ENCODE measurements at regions of chr12 and their contacts with region 1.

Region 1: GRCh38 chr12:118357257-118358007 is 15.3 kb downstream of the TAOK3 start:
- DNase-seq: peak; percentile 60 to 78 (median 64)
- H3K4me3 ChIP-seq: peak overlapping the region; percentile 15 to 56
- H3K4me3 Mint-ChIP-seq: peak overlapping the region; percentile 63 to 94 (median 82)
- H3K27ac ChIP-seq: peak overlapping the region; percentile 28
- H3K27ac Mint-ChIP-seq: peak overlapping the region; percentile 74 to 93 (median 86)
- H3K4me1 ChIP-seq: peaks cover 41% of the 10 kb centered on the region
- H3K4me1 Mint-ChIP-seq: peaks cover 29 to 67% (median 49%) of the 10 kb centered on the region in 4 donors
- H3K27me3 ChIP-seq: no peaks in the 10 kb centered on the region
- H3K27me3 Mint-ChIP-seq: no peaks in the 10 kb centered on the region

Region 2: DNA sequence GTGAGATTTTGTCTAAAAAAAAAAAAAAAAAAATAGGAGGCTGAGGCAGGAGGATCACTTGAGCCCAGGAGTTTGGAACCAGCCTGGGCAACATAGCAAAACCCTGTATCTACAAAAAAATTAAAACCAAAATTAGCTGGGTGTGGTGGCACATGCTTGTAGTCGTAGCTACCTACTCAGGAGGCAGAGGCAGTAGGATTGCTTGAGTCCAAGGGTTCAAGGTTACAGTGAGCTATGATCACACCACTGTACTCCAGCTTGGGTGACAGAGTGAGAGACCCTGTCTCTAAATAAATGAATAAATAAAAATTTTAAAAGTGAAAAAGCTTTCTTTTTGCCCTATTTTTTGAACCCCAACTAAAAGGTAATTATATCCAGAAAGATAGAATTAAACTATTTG is 107.9 kb before region 1 on chr12:
- CTCF ChIA-PET with region 1: no interaction called
- POLR2A ChIA-PET with region 1: no interaction called
- intact Hi-C with region 1: no loop called
- DNase-seq: no peak
- H3K4me3 ChIP-seq: no peak overlapping the region
- H3K4me3 Mint-ChIP-seq: no peak overlapping the region
- H3K27ac ChIP-seq: no peak overlapping the region
- H3K27ac Mint-ChIP-seq: no peak overlapping the region
- H3K4me1 ChIP-seq: no peaks in the 10 kb centered on the region
- H3K4me1 Mint-ChIP-seq: peaks cover 0 to 10% (median under 1%) of the 10 kb centered on the region in 4 donors
- H3K27me3 ChIP-seq: no peaks in the 10 kb centered on the region
- H3K27me3 Mint-ChIP-seq: no peaks in the 10 kb centered on the region

Region 3: GRCh38 chr12:118299791-118300460 is 57.5 kb before region 1 on chr12:
- CTCF ChIA-PET with region 1: no interaction called
- POLR2A ChIA-PET with region 1: interaction called, 3 read pairs
- intact Hi-C with region 1: loop called (anchors 5 kb)
- DNase-seq: no peak
- H3K4me3 ChIP-seq: no peak overlapping the region
- H3K4me3 Mint-ChIP-seq: no peak overlapping the region
- H3K27ac ChIP-seq: no peak overlapping the region
- H3K27ac Mint-ChIP-seq: peak overlapping the region in 2 of 7 donors; percentile 11 to 48
- H3K4me1 ChIP-seq: peaks cover 13% of the 10 kb centered on the region
- H3K4me1 Mint-ChIP-seq: peaks cover 31 to 47% (median 35%) of the 10 kb centered on the region in 4 donors
- H3K27me3 ChIP-seq: no peaks in the 10 kb centered on the region
- H3K27me3 Mint-ChIP-seq: no peaks in the 10 kb centered on the region

Region 4: DNA sequence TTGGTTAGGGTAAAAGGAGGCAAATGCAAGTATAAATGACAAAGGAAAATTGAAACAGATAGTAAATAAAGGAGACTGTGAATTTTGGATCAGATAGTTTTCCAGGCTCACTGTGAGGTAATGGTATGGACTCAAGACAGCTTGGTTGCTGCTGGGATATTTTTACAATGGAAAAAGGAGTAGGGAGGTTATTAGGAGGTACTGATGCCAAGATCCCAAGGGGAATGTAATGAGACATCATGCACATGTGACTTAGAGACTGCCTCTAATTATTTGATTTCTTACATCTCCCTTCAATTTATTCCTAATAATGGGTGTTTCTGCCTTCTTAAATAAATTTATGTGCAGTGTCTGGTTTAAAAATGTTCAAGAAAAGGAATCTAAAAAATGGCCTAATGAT is 41.6 kb before region 1 on chr12:
- CTCF ChIA-PET with region 1: no interaction called
- POLR2A ChIA-PET with region 1: interaction called, 3 read pairs
- intact Hi-C with region 1: loop called (anchors 5 kb)
- DNase-seq: no peak
- H3K4me3 ChIP-seq: no peak overlapping the region
- H3K4me3 Mint-ChIP-seq: no peak overlapping the region
- H3K27ac ChIP-seq: no peak overlapping the region
- H3K27ac Mint-ChIP-seq: peak overlapping the region in 1 of 7 donors; percentile 24
- H3K4me1 ChIP-seq: peaks cover 16% of the 10 kb centered on the region
- H3K4me1 Mint-ChIP-seq: peaks cover 29 to 38% (median 31%) of the 10 kb centered on the region in 4 donors
- H3K27me3 ChIP-seq: no peaks in the 10 kb centered on the region
- H3K27me3 Mint-ChIP-seq: no peaks in the 10 kb centered on the region

Region 5: GRCh38 chr12:118581371-118581770 is 223.9 kb after region 1 on chr12:
- CTCF ChIA-PET with region 1: no interaction called
- POLR2A ChIA-PET with region 1: no interaction called
- intact Hi-C with region 1: no loop called
- DNase-seq: no peak
- H3K4me3 ChIP-seq: no peak overlapping the region
- H3K4me3 Mint-ChIP-seq: no peak overlapping the region
- H3K27ac ChIP-seq: no peak overlapping the region
- H3K27ac Mint-ChIP-seq: no peak overlapping the region
- H3K4me1 ChIP-seq: no peaks in the 10 kb centered on the region
- H3K4me1 Mint-ChIP-seq: no peaks in the 10 kb centered on the region
- H3K27me3 ChIP-seq: no peaks in the 10 kb centered on the region
- H3K27me3 Mint-ChIP-seq: peaks cover 2 to 3% of the 10 kb centered on the region in 2 donors